Transverse colon (tissue), 4 donors: ENCODE measurements at regions of chr21 and their contacts with region 1.

Region 1: DNA sequence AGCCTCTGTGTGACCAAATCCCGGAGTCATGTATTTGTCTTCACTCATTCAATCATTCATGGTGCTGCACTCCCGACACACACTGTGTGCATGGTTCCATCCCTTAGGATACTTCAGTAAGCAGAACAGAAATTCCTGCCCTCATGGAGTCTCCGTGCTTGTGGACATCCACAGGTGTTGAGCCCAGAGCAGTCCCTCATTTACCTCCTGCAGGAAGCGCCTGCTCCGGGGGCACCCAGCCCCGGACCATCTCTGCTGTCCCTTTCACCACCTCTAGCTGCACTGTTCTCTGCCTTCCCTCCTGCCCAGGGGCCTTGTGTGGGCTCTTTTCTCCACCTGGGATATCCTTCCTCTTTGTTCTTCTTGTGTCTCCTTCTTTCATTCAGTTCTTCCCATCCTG is 9.5 kb upstream of the ZBTB21 start:
- DNase-seq: no peak
- H3K4me3 ChIP-seq: no peak overlapping the region
- H3K27ac ChIP-seq: no peak overlapping the region
- H3K4me1 ChIP-seq: no peaks in the 10 kb centered on the region
- H3K27me3 ChIP-seq: no peaks in the 10 kb centered on the region
- CTCF ChIP-seq: no peak
- EP300 ChIP-seq: no peak
- POLR2A ChIP-seq: no peak

Region 2: DNA sequence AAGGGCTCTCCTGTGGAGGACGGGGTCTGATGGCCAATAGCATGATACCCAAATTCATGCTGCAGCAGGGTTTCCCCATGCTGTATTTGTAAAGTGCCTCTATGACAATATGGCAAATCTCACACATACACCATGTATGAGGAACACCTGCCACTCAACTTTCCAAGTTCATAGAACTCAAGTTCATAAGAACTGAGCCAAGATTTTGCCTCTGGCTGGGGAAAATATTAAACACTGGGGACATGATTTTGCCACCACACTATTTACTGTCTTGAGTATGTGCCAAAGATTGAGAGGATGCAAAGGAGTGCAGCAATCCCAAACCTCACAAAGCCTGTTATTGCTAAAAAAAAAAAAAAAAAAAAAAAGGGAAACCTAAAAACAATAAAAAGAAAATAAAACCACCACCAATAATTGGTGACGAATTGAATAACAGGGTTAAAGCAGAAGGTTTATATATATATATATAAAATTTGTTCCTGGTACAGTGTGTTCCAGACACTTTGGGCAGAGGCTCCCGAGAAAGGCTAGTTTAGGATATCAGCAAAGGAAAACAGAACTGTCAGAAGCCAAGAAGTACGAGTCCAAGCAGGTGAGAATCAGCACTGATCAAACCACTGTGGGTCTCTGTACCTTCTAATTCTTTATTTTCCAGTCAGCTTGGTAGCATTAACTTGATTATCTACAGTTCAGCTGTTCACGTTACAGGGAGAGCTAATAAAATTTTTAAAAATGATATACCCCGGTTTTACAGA is 33.9 kb before region 1 on chr21:
- in situ Hi-C with region 1: no loop called
- intact Hi-C with region 1: loop called (anchors 1 kb)
- DNase-seq: no peak
- H3K4me3 ChIP-seq: no peak overlapping the region
- H3K27ac ChIP-seq: no peak overlapping the region
- H3K4me1 ChIP-seq: no peaks in the 10 kb centered on the region
- H3K27me3 ChIP-seq: no peaks in the 10 kb centered on the region
- CTCF ChIP-seq: no peak
- EP300 ChIP-seq: no peak
- POLR2A ChIP-seq: no peak